Right ventricle myocardium superior (tissue), 1 donor: ENCODE measurements at regions of chr1 and their contacts with region 1.

Region 1: DNA sequence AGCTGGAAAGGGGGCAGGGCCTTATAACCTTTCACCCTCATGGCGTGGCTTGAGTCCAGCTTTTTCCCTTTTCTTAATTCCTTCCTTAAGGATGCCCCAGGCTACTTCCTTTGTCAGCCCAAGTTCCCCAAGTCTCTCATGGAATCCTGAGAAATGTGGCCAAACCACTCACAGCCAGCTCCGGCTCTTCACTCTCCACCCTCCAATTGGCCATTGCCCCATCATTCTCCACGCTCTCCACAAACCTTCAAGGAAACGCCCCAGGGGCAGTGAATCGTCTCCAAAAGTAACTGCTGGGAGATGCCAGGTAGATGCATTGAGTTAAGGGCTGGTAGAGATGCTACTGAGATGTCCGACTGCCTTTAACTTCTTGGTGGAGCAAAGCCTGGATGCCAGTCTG is 113.5 kb upstream of the CD34 start:
- DNase-seq: no peak
- ATAC-seq: no peak

Region 2: DNA sequence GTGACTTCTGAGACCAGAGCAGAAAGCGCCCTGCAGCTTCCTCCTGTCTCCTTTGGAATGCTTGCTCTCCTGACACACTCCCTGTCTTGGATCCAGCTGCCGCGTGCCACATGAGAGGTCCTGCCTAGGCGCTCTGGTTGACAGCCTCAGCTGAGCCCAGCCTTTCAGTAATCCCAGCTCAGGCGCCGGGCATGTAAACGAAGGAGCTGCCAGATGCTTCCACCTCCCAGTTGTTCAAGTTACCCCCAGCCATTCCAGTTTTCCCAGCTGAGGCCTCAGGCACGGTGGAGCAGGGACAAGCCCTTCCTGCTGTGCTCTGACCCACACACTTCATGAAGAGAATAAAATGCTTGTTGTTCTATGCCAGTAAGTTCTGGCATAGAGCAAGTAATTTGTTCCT is 99.2 kb before region 1 on chr1:
- intact Hi-C with region 1: no loop called
- DNase-seq: peak; percentile 82
- ATAC-seq: peak; percentile 39

Region 3: GRCh38 chr1:208093754-208094719 is 69.6 kb after region 1 on chr1:
- intact Hi-C with region 1: loop called (anchors 5 kb)
- DNase-seq: peak; percentile 85
- ATAC-seq: peak; percentile 71

Region 4: GRCh38 chr1:208251911-208252835 is 227.8 kb after region 1 on chr1:
- intact Hi-C with region 1: loop called (anchors 5 kb)
- DNase-seq: peak; percentile 51
- ATAC-seq: peak; percentile 72